Activated CD4-positive, alpha-beta memory T cell treated with anti-CD3 and anti-CD28 coated beads for 36 hours (primary cell): ENCODE measurements at regions of chr14 and their contacts with region 1.

Region 1: DNA sequence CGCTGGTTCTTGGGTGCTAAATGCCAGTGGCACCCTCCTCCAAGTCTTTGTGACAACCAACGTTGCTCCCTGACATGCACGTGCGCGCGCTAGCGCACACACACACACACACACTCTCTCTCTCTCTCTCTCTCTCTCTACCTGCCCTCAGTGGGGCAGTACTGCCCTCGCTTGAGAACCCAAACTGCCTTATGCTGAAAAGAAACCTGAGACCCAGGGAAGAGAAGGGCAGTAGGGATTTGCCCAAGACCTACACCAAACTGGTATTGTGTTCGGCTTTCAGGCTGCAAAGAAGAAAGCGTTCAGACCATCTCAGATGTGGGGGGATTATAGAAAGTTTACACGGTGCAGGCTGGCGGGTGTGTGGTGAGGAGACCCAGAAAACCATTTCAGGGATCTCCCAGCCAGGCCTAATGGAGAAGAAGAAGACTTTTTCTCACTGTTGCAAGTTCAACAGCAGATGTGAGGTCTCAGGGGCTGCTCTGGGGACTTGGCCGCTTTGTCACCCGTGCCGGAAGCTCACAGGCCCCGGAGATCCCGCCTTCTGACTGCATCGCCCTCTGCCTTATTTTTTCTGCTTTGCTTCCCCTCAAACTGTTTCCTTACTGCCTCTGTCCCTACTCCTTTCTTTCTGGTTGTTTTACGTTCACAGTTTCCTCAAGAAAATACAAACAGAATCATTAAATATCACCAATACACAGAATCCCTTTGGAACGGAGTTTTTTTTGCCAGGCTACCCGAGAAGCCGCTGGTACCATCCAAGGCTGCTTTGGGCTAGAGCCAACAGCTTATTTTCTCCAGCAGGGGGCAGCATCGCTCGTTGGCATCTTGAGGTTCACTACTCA is 82.4 kb downstream of the PPM1A start:
- DNase-seq: peak; percentile 85
- H3K4me3 Mint-ChIP-seq: peak overlapping the region; percentile 84
- H3K27ac Mint-ChIP-seq: peak overlapping the region; percentile 85
- H3K4me1 Mint-ChIP-seq: peaks cover 37% of the 10 kb centered on the region
- H3K27me3 Mint-ChIP-seq: peaks cover 36% of the 10 kb centered on the region

Region 2: DNA sequence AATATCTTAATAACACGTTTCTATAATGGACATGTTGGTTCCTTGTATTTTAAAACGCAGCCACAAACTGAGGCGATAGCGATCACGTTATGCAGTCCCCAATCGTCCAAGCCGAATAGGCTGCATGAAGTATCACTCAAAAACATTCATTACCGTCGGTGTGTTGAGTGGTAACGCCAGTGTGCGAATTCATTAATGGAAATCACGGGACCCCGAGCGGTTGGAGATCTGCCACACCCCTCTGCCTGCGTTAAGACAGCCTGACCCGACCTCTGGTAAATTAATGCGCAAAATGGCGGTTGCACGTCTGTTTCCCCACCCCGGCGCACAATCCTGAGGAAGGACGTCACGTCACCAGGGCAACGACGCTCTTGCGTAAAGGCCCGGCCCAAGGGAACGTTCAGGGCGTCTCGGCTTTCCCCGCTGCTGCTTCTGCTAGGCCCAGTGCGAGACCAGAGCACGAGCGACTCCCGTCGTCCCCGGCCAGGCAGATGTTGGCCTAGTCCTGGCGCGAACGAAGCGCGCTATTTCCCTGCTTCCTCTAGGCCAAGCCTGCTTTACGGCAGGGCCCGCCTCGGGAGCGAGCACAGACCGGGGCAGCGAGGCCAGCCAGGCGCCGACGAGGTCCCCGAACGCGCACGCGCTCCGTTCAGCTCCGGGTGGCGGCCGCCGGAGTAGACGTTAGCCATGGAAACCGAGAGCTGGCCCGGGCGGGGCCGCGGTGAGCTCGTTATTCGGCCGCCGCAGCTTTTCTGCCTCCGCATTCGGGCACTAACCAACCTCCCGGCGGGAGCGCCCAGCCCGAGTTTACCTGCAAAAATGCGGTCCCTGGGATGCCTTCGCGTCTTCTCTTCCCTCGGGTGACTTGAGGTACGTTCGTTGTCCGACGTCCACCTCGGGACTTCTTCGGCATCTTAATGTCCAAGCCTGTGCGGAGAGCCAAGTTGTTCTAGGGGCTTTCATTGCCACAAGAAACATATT is 239.6 kb before region 1 on chr14 and contains the start of gene PCNX4:
- CTCF ChIA-PET with region 1: interaction called, 9 read pairs
- POLR2A ChIA-PET with region 1: no interaction called
- intact Hi-C with region 1: loop called (anchors 1 kb)
- DNase-seq: peak; percentile 95
- H3K4me3 Mint-ChIP-seq: peak within 1 kb of the TSS; percentile 95
- H3K27ac Mint-ChIP-seq: peak within 1 kb of the TSS; percentile 91
- H3K4me1 Mint-ChIP-seq: peaks cover 30% of the 10 kb centered on the region
- H3K27me3 Mint-ChIP-seq: no peaks in the 10 kb centered on the region
- total RNA-seq, gene PCNX4: 26.3 to 26.9 TPM

Region 3: GRCh38 chr14:60266021-60266937 is 65.1 kb before region 1 on chr14:
- CTCF ChIA-PET with region 1: interaction called, 12 read pairs
- POLR2A ChIA-PET with region 1: no interaction called
- intact Hi-C with region 1: no loop called
- DNase-seq: peak; percentile 19
- H3K4me3 Mint-ChIP-seq: no peak overlapping the region
- H3K27ac Mint-ChIP-seq: no peak overlapping the region
- H3K4me1 Mint-ChIP-seq: peaks cover 18% of the 10 kb centered on the region
- H3K27me3 Mint-ChIP-seq: no peaks in the 10 kb centered on the region

Region 4: DNA sequence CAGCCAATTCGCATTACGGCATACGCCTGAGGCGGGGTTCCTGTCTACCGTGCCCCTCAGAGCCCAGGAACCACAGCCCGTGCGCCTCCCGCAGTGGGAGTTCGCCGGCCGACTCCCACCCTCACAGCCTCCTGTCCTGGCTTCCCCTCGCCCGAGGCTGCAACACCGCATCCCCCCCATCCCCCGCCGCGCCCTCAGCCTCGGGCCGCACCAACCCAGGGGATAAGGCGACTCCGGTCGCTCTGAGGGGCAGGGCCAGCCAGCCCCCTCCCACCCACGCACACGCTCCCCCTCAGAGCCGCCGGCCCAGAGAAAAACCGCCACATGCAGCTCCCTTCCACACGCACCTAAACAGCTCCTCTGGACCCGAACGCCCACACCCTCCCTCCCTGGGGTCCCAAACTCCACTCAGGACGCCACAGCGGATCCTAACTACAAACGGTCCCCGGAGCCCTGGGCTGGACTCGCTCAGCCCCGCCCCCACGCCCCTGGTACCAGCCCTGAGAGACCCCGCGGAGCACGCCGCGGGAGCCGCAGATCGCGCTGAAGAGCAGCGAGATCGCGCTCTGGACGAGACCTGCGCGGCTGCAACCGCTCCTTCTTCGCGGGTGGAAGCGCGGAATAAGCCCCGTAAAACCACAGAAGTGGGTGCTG is 154.3 kb after region 1 on chr14 and contains the start of gene C14orf39:
- CTCF ChIA-PET with region 1: no interaction called
- POLR2A ChIA-PET with region 1: no interaction called
- intact Hi-C with region 1: loop called (anchors 5 kb)
- DNase-seq: peak; percentile 25
- H3K4me3 Mint-ChIP-seq: no peak within 1 kb of the TSS
- H3K27ac Mint-ChIP-seq: no peak within 1 kb of the TSS
- H3K4me1 Mint-ChIP-seq: peaks cover 3% of the 10 kb centered on the region
- H3K27me3 Mint-ChIP-seq: peaks cover 20% of the 10 kb centered on the region
- total RNA-seq, gene C14orf39: not detected